ENCODE measurements at regions of chr15 and their contacts with region 1.

Region 1: GRCh38 chr15:57706405-57707209 is at the start of gene POLR2M:
- DNase-seq: peak; percentile 97
- H3K4me3 Mint-ChIP-seq: peak within 1 kb of the TSS; percentile 79
- H3K27ac Mint-ChIP-seq: peak within 1 kb of the TSS; percentile 63
- H3K4me1 Mint-ChIP-seq: peaks cover 37% of the 10 kb centered on the region
- H3K27me3 Mint-ChIP-seq: no peaks in the 10 kb centered on the region
- CTCF ChIP-seq: no peak
- total RNA-seq, gene POLR2M: 84.1 and 114 TPM in 2 replicates

Region 2: DNA sequence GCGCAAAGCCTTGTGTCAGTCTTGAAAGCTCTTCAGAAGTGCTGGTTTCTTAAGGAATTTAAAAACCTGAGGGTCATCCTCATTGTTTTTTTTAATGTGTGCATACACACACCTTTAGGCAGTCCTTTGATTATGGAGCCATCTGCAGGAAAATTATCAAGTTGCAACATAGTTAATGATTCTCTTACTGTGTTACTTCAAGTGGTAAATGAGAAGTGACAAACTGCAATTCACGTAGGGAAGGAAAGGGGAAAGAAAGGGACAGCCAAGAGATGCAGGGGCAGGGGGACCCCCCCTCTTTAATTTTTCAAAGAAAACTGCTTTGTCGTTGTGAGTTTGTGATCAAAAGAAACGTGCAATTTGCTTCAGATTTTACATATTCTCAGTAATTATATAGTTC is 492.7 kb before region 1 on chr15:
- CTCF ChIA-PET with region 1: no interaction called
- POLR2A ChIA-PET with region 1: no interaction called
- intact Hi-C with region 1: no loop called
- DNase-seq: peak; percentile 46
- H3K4me3 Mint-ChIP-seq: no peak overlapping the region
- H3K27ac Mint-ChIP-seq: no peak overlapping the region
- H3K4me1 Mint-ChIP-seq: peaks cover 11% of the 10 kb centered on the region
- H3K27me3 Mint-ChIP-seq: no peaks in the 10 kb centered on the region
- CTCF ChIP-seq: peak; percentile 37

Region 3: DNA sequence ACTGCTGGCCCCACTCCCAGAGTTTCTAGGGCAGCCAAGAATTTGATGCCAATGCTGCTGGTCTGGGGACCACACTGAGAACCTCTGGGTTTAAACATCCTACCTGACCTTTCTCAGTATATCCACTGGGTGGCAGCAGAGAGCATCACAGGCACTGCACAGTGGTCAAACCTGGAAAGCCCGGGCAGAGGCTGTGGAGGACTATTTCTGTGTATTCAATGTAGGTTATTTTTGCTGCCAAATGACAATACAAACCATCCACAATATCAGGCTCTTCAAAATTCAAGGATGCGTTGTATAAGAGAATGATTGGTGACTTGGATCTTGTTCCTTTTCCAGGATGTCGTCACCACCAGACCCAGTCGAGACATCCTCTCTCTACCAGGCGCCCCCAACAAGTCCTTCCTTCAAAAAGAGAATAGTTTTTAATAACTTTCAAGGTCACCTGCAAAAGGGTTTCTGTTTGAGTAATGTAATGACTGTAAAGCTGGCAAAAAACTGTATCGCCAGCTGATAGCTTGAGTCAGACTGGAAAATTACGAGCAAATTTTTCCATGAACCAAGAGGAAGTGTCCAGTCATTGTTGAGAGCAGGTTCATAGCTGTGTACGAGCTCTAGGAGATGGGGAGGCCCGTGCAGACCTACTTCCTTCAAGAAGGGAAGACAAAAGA is 145.4 kb before region 1 on chr15:
- CTCF ChIA-PET with region 1: interaction called, 11 read pairs
- POLR2A ChIA-PET with region 1: interaction called, 8 read pairs
- intact Hi-C with region 1: loop called (anchors 2 kb)
- DNase-seq: peak; percentile 87
- H3K4me3 Mint-ChIP-seq: no peak overlapping the region
- H3K27ac Mint-ChIP-seq: no peak overlapping the region
- H3K4me1 Mint-ChIP-seq: peaks cover 18% of the 10 kb centered on the region
- H3K27me3 Mint-ChIP-seq: no peaks in the 10 kb centered on the region
- CTCF ChIP-seq: peak; percentile 86

Region 4: GRCh38 chr15:57649138-57649537 is 57.5 kb before region 1 on chr15:
- CTCF ChIA-PET with region 1: interaction called, 3 read pairs
- POLR2A ChIA-PET with region 1: interaction called, 11 read pairs
- intact Hi-C with region 1: no loop called
- DNase-seq: peak; percentile 97
- H3K4me3 Mint-ChIP-seq: no peak overlapping the region
- H3K27ac Mint-ChIP-seq: peak overlapping the region; percentile 69
- H3K4me1 Mint-ChIP-seq: peaks cover 18% of the 10 kb centered on the region
- H3K27me3 Mint-ChIP-seq: no peaks in the 10 kb centered on the region
- CTCF ChIP-seq: no peak

Region 5: DNA sequence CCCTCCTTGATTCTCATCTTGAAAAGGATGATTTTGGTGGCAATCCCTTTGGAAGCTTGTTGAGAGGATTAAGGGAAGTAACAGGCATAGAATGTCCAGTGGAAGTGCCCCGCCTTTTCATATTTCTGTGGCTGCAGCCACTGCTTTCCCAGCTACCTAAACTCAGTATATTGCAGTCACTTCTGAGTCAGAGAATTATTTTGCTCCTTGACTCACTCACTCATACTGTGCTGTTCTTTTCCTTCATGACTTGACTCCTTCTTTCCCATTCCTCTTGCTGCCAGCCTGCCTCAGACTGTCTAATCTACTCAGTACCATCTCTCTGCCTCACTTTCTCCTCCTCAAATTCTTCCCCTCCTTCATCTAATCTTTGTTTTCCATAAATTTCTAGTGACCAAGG is 26.6 kb before region 1 on chr15:
- CTCF ChIA-PET with region 1: interaction called, 8 read pairs
- POLR2A ChIA-PET with region 1: interaction called, 4 read pairs
- intact Hi-C with region 1: loop called (anchors 2 kb)
- DNase-seq: peak; percentile 67
- H3K4me3 Mint-ChIP-seq: peak overlapping the region; percentile 24
- H3K27ac Mint-ChIP-seq: peak overlapping the region; percentile 20
- H3K4me1 Mint-ChIP-seq: peaks cover 18% of the 10 kb centered on the region
- H3K27me3 Mint-ChIP-seq: no peaks in the 10 kb centered on the region
- CTCF ChIP-seq: no peak

Region 6: GRCh38 chr15:57720867-57721266 is 14.3 kb after region 1 on chr15:
- CTCF ChIA-PET with region 1: interaction called, 3 read pairs
- POLR2A ChIA-PET with region 1: interaction called, 36 read pairs
- intact Hi-C with region 1: no loop called
- DNase-seq: no peak
- H3K4me3 Mint-ChIP-seq: no peak overlapping the region
- H3K27ac Mint-ChIP-seq: no peak overlapping the region
- H3K4me1 Mint-ChIP-seq: no peaks in the 10 kb centered on the region
- H3K27me3 Mint-ChIP-seq: no peaks in the 10 kb centered on the region
- CTCF ChIP-seq: no peak

Region 7: GRCh38 chr15:57732526-57733331 is 26.1 kb after region 1 on chr15:
- CTCF ChIA-PET with region 1: interaction called, 17 read pairs
- POLR2A ChIA-PET with region 1: interaction called, 28 read pairs
- intact Hi-C with region 1: no loop called
- DNase-seq: peak; percentile 71
- H3K4me3 Mint-ChIP-seq: no peak overlapping the region
- H3K27ac Mint-ChIP-seq: no peak overlapping the region
- H3K4me1 Mint-ChIP-seq: peaks cover 6% of the 10 kb centered on the region
- H3K27me3 Mint-ChIP-seq: no peaks in the 10 kb centered on the region
- CTCF ChIP-seq: peak; percentile 80

Measured in MCF 10A (cell line).